Activated naive CD4-positive, alpha-beta T cell treated with anti-CD3 and anti-CD28 coated beads for 36 hours (primary cell): ENCODE measurements at regions of chr13 and their contacts with region 1.

Region 1: GRCh38 chr13:46655377-46656180 is 102.6 kb downstream of the LRCH1 start:
- DNase-seq: peak; percentile 12
- H3K4me3 Mint-ChIP-seq: no peak overlapping the region
- H3K27ac Mint-ChIP-seq: no peak overlapping the region
- H3K4me1 Mint-ChIP-seq: peaks cover 36% of the 10 kb centered on the region
- H3K27me3 Mint-ChIP-seq: no peaks in the 10 kb centered on the region

Region 2: GRCh38 chr13:46341112-46341711 is 314.4 kb before region 1 on chr13:
- CTCF ChIA-PET with region 1: no interaction called
- intact Hi-C with region 1: loop called (anchors 2 kb)
- DNase-seq: peak; percentile 78
- H3K4me3 Mint-ChIP-seq: peak overlapping the region; percentile 63
- H3K27ac Mint-ChIP-seq: peak overlapping the region; percentile 92
- H3K4me1 Mint-ChIP-seq: peaks cover 52% of the 10 kb centered on the region
- H3K27me3 Mint-ChIP-seq: no peaks in the 10 kb centered on the region

Region 3: DNA sequence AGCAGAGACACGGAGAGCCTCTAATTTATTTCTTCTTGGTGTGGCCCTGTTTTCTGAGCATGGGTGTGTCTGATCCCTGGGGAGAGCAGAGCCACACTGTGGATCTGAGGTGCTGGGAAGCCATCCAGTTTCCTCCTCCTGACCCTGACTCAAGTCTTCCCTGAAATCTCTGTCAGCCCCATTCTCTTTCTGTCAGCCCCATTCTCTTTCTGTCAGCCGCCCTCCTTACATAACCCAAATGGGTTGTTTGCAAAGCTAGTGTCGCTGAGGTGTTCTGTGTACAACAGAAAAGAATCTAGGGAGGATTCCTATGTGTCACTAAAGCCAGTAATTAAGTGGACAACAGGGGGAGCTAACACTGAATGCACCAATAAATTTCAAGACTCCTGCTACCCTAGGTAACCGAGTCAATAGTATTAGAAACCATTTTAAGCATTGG is 52.4 kb before region 1 on chr13:
- CTCF ChIA-PET with region 1: interaction called, 3 read pairs
- intact Hi-C with region 1: loop called (anchors 2 kb)
- DNase-seq: no peak
- H3K4me3 Mint-ChIP-seq: no peak overlapping the region
- H3K27ac Mint-ChIP-seq: no peak overlapping the region
- H3K4me1 Mint-ChIP-seq: peaks cover 78% of the 10 kb centered on the region
- H3K27me3 Mint-ChIP-seq: no peaks in the 10 kb centered on the region

Region 4: DNA sequence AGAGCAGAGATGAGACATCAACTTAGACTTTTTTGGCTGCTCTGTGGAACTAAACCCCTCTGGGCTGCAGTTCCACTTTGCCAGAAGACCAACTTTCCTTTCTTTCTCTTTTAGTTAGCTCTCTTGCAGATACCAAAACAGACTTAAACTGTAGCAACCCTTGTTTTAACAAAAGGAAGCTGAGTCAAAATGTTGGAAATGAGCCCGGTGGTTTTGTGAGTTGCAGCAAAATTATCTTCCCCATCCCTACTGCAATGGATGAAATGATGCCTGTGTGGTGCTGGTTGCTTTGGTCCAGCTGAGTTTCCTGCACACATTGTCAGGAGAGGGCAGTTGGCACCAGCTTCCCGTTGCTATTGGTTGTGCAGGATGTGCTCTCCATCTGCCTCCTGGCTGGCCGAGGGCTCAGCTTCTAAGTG is 12.7 kb after region 1 on chr13:
- CTCF ChIA-PET with region 1: interaction called, 7 read pairs
- intact Hi-C with region 1: loop called (anchors 1 kb)
- DNase-seq: peak; percentile 58
- H3K4me3 Mint-ChIP-seq: peak overlapping the region; percentile 72
- H3K27ac Mint-ChIP-seq: peak overlapping the region; percentile 85
- H3K4me1 Mint-ChIP-seq: peaks cover 37% of the 10 kb centered on the region
- H3K27me3 Mint-ChIP-seq: no peaks in the 10 kb centered on the region

Region 5: DNA sequence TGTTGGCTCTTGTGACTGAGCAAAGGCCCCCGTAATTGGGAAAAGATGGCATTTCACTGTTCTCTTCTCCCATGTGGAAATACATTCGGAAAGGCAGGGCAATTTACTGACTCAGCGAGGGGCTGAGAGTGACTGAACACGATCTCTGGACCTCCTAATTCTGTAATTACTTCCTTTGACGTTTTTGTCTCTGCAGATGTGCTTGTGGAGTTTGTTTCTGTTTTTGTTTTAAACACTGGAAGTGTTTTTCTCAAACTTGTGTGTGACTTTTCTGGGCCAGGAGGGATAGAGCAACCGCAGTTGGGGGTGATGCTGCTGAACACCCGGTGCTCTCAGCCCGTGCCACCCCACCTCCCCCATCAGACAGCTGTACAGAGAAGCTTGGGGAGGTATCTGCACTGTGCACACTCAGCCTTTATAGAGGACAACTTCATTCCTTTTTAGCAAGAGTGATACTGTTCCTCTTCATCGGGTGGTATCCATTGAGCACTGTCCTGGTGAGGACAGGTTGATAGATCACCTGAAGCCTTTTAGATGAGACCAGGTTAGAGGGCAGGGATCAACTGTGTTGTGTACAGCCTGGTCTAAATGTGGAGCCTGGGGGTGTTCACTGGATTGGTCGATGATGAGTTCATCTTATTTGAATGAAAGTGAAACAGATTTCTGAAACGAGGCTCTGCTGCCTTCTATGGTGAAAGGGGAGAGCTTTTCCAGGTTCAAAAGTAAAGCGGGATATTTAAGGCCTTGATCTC is 24.0 kb after region 1 on chr13:
- CTCF ChIA-PET with region 1: interaction called, 3 read pairs
- intact Hi-C with region 1: loop called (anchors 2 kb)
- DNase-seq: peak; percentile 45
- H3K4me3 Mint-ChIP-seq: no peak overlapping the region
- H3K27ac Mint-ChIP-seq: no peak overlapping the region
- H3K4me1 Mint-ChIP-seq: peaks cover 16% of the 10 kb centered on the region
- H3K27me3 Mint-ChIP-seq: no peaks in the 10 kb centered on the region